ENCODE measurements at regions of chr3 and their contacts with region 1.

Region 1: GRCh38 chr3:9838856-9839255 is 5.0 kb downstream of the RPUSD3 start:
- DNase-seq: no peak
- ATAC-seq: no peak
- H3K4me3 ChIP-seq: no peak overlapping the region
- H3K4me3 Mint-ChIP-seq: no peak overlapping the region
- H3K27ac ChIP-seq: no peak overlapping the region
- H3K27ac Mint-ChIP-seq: peak overlapping the region in 1 of 2 donors; percentile 16
- H3K4me1 ChIP-seq: peaks cover 2 to 14% of the 10 kb centered on the region in 2 experiments
- H3K4me1 Mint-ChIP-seq: peaks cover 15 to 21% (median 20%) of the 10 kb centered on the region in 3 donors
- H3K27me3 ChIP-seq: no peaks in the 10 kb centered on the region
- H3K27me3 Mint-ChIP-seq: no peaks in the 10 kb centered on the region

Region 2: DNA sequence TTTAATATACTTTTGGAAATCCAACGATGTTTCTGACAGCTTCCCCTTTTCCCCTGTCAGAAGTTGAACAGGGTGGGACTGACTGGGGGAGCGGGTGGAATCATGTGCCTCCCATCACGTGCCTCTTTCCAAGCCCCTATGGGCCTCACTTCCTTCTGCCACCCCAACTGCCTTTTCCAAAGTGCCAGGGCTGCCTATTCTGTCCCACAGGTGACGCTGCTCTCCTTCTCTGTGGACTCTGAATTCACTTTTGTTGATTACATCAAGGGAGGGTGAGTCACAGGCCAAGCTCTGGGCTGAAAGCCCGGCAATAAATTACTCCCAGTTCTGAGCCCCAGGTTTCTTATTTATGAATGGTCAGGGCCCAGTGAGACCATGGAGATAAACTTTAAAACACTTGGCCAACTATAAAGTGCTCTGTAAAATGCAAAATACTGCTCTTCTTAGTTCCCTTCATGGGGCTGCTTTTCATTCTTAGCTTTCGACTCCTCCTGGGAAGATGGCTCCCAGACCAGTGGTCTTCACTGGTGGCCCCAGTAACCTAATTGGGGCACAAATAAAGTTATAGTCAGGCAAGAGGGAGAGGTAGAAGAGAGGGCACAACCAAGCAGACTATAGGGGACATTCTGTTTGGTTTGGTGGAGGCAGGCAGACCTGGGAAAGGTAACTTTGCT is 123.0 kb before region 1 on chr3:
- CTCF ChIA-PET with region 1: no interaction called
- POLR2A ChIA-PET with region 1: no interaction called
- DNase-seq: peak in 6 of 35 experiments; percentile 19 to 48 (median 30)
- ATAC-seq: peak; percentile 53 to 82 (median 66)
- H3K4me3 ChIP-seq: no peak overlapping the region
- H3K4me3 Mint-ChIP-seq: no peak overlapping the region
- H3K27ac ChIP-seq: no peak overlapping the region
- H3K27ac Mint-ChIP-seq: no peak overlapping the region
- H3K4me1 ChIP-seq: peaks cover 2 to 7% of the 10 kb centered on the region in 2 experiments
- H3K4me1 Mint-ChIP-seq: peaks cover 12 to 16% (median 14%) of the 10 kb centered on the region in 3 donors
- H3K27me3 ChIP-seq: peaks cover 0 to 7% of the 10 kb centered on the region in 2 experiments
- H3K27me3 Mint-ChIP-seq: peaks cover 0 to 5% of the 10 kb centered on the region in 2 donors

Region 3: DNA sequence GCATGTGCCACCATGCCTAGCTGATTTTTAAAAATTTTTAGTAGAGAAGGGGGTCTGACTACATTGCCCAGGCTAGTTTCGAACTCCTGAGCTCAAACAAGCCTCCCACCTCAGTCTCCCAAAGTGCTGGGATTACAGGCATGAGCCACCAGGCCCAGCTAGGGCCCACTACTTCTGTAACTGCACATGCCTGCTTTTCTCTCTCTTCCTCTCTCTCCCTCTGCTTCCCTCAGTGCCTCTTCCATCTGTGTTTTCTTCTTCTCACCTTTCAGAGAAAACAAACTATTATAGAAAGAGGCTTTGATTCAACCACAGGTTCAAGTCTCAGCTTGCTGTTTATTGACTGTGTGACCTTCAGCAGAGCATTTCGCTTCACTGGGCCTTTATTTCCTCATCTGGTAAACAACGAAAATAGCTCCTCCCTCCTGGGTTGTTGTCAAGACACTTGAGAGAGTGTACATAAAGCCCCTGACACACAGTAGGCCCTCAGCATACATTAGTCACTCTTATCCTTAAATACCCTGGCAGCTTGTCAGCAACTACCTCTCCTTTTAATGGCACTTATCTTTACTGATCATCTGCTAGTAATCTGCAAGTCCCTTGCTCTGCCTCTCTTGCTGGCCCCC is 56.8 kb before region 1 on chr3:
- CTCF ChIA-PET with region 1: interaction called in 1 of 2 experiments, 16 read pairs
- POLR2A ChIA-PET with region 1: interaction called in 1 of 2 experiments, 6 read pairs
- DNase-seq: no peak
- ATAC-seq: no peak
- H3K4me3 ChIP-seq: no peak overlapping the region
- H3K4me3 Mint-ChIP-seq: peak overlapping the region in 1 of 3 donors; percentile 5
- H3K27ac ChIP-seq: no peak overlapping the region
- H3K27ac Mint-ChIP-seq: peak overlapping the region; percentile 63 to 66
- H3K4me1 ChIP-seq: peaks cover 38 to 46% of the 10 kb centered on the region in 2 experiments
- H3K4me1 Mint-ChIP-seq: peaks cover 48 to 57% (median 56%) of the 10 kb centered on the region in 3 donors
- H3K27me3 ChIP-seq: no peaks in the 10 kb centered on the region
- H3K27me3 Mint-ChIP-seq: no peaks in the 10 kb centered on the region

Region 4: DNA sequence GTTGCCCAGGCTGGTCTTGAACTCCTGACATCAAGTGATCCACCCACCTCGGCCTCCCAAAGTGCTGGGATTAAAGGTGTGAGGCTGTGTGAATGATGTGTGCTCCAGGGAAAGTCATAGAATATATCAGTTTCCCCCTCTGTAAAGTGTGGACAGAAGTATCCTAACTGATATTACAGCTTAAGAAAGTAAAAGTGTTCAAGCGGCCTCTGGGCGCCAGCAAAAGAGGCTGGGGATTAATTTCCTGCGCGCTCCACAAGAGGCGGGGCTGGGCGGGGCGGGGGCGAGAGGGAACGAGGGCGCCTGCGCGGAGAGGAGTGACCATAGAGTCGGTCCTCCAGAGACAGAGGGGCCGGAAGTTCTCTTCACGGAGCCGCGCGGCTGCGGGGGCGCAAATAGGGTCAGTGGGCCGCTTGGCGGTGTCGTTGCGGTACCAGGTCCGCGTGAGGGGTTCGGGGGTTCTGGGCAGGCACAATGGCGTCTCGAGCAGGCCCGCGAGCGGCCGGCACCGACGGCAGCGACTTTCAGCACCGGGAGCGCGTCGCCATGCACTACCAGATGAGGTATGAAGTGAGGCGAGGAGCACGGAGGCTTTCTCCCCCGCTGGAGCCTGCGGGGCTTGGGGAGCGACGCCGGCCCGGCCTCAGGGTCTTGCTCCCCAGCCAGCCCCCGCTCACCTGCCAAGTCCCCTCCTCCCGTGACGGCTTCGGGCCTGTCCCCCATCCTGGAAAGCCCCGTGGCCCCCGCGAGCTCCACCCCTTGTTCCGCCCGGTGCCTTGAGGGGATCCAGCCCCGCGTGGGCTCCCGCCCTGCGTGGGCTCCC is 51.6 kb after region 1 on chr3 and contains the start of gene JAGN1:
- CTCF ChIA-PET with region 1: no interaction called
- POLR2A ChIA-PET with region 1: no interaction called
- DNase-seq: peak; percentile 78 to 96 (median 88)
- ATAC-seq: peak; percentile 87 to 93 (median 90)
- H3K4me3 ChIP-seq: peak within 1 kb of the TSS; percentile 86 to 100
- H3K4me3 Mint-ChIP-seq: peak within 1 kb of the TSS; percentile 94 to 96 (median 96)
- H3K27ac ChIP-seq: peak within 1 kb of the TSS; percentile 100
- H3K27ac Mint-ChIP-seq: peak within 1 kb of the TSS; percentile 95 to 98
- H3K4me1 ChIP-seq: peaks cover 8 to 20% of the 10 kb centered on the region in 2 experiments
- H3K4me1 Mint-ChIP-seq: peaks cover 37 to 43% (median 40%) of the 10 kb centered on the region in 3 donors
- H3K27me3 ChIP-seq: no peaks in the 10 kb centered on the region
- H3K27me3 Mint-ChIP-seq: no peaks in the 10 kb centered on the region
- total RNA-seq, gene JAGN1: 16.9 to 28.6 (median 23.7) TPM